Stomach (tissue), 19 donors: ENCODE measurements at regions of chr6 and their contacts with region 1.

Region 1: GRCh38 chr6:49519660-49520059 is 19.9 kb downstream of the GLYATL3 start:
- DNase-seq: no peak
- H3K4me3 ChIP-seq: no peak overlapping the region
- H3K27ac ChIP-seq: no peak overlapping the region
- H3K4me1 ChIP-seq: peaks cover 4 to 16% (median 6%) of the 10 kb centered on the region in 4 donors
- H3K27me3 ChIP-seq: no peaks in the 10 kb centered on the region
- CTCF ChIP-seq: no peak
- EP300 ChIP-seq: no peak
- POLR2A ChIP-seq: no peak

Region 2: GRCh38 chr6:49606696-49607390 is 87.2 kb after region 1 on chr6:
- intact Hi-C with region 1: loop called (anchors 10 kb)
- DNase-seq: peak in 1 of 2 donors; percentile 92
- H3K4me3 ChIP-seq: no peak overlapping the region
- H3K27ac ChIP-seq: no peak overlapping the region
- H3K4me1 ChIP-seq: no peaks in the 10 kb centered on the region
- H3K27me3 ChIP-seq: peaks cover 0 to 3% (median 0%) of the 10 kb centered on the region in 3 donors
- CTCF ChIP-seq: peak in 5 of 7 experiments; percentile 69 to 76 (median 71)
- EP300 ChIP-seq: no peak
- POLR2A ChIP-seq: no peak

Region 3: DNA sequence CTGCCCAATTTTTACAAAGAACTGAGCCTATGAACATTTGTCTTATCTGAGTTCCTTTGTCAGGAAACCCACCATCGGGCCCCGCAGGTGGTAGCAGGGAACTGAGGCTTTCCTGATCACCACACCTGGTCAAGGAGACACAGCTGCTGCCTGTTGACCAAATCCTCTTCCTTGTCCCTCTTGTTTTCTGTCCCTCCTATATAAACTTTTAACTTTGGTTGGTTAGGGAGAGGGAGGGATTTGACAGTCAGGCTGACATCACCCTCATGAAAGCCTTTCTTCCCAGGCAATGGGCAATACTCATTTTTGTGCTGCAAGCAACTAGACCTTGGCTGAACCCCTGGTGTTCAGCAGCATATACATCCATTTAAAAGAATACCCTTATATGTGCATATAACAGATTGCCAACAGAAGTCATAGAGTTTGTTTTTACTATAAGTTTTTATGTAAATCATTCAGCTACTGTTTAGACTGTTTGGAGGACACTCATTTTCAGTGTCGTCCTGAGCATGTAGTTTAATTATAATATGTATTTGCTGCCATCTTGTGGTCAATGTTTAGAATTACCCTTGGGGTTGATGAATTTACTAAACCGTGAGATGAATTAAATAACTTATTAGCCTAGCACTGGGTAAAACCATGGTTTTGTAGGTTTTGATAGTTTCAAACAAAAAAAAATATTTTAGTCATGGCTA is 329.7 kb after region 1 on chr6:
- intact Hi-C with region 1: loop called (anchors 10 kb)
- DNase-seq: peak in 1 of 2 donors; percentile 68
- H3K4me3 ChIP-seq: no peak overlapping the region
- H3K27ac ChIP-seq: no peak overlapping the region
- H3K4me1 ChIP-seq: no peaks in the 10 kb centered on the region
- H3K27me3 ChIP-seq: peaks cover 0 to 4% (median 0%) of the 10 kb centered on the region in 3 donors
- CTCF ChIP-seq: peak in 5 of 7 experiments; percentile 18 to 69 (median 62)
- EP300 ChIP-seq: no peak
- POLR2A ChIP-seq: no peak